ENCODE measurements at regions of chr10 and their contacts with region 1.

Region 1: GRCh38 chr10:91298224-91298871 is 77.9 kb downstream of the PCGF5 start:
- DNase-seq: peak; percentile 74
- H3K4me3 ChIP-seq: peak overlapping the region in 1 of 2 donors; percentile 24
- H3K27ac ChIP-seq: peak overlapping the region in 1 of 2 donors; percentile 20
- H3K4me1 ChIP-seq: no peaks in the 10 kb centered on the region
- H3K27me3 ChIP-seq: no peaks in the 10 kb centered on the region
- CTCF ChIP-seq: peak; percentile 88 to 95 (median 90)
- POLR2A ChIP-seq: no peak

Region 2: DNA sequence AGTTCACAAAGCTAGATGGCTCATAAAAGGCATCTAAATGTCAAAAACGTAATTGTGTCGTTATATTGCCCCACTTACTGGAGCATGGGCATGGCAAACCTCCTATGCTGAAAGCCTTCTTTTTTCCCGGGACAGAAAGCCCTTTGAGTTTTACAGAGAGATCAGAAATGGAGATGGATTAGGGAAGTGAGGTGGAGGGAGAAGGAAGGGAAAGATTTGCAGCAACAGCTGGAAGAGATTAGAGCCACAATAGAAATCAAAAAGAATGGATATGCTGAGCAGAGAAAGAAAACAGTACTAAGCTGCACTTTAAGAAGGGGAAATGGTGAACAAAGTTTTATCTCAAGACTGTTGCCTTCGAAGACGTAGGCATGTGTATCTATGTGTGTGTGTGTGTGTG is 175.1 kb before region 1 on chr10:
- intact Hi-C with region 1: no loop called
- DNase-seq: no peak
- H3K4me3 ChIP-seq: no peak overlapping the region
- H3K27ac ChIP-seq: no peak overlapping the region
- H3K4me1 ChIP-seq: no peaks in the 10 kb centered on the region
- H3K27me3 ChIP-seq: no peaks in the 10 kb centered on the region
- CTCF ChIP-seq: no peak
- POLR2A ChIP-seq: no peak

Region 3: GRCh38 chr10:91367127-91367531 is 68.8 kb after region 1 on chr10:
- intact Hi-C with region 1: loop called (anchors 5 kb)
- DNase-seq: no peak
- H3K4me3 ChIP-seq: no peak overlapping the region
- H3K27ac ChIP-seq: no peak overlapping the region
- H3K4me1 ChIP-seq: no peaks in the 10 kb centered on the region
- H3K27me3 ChIP-seq: no peaks in the 10 kb centered on the region
- CTCF ChIP-seq: no peak
- POLR2A ChIP-seq: no peak

Region 4: DNA sequence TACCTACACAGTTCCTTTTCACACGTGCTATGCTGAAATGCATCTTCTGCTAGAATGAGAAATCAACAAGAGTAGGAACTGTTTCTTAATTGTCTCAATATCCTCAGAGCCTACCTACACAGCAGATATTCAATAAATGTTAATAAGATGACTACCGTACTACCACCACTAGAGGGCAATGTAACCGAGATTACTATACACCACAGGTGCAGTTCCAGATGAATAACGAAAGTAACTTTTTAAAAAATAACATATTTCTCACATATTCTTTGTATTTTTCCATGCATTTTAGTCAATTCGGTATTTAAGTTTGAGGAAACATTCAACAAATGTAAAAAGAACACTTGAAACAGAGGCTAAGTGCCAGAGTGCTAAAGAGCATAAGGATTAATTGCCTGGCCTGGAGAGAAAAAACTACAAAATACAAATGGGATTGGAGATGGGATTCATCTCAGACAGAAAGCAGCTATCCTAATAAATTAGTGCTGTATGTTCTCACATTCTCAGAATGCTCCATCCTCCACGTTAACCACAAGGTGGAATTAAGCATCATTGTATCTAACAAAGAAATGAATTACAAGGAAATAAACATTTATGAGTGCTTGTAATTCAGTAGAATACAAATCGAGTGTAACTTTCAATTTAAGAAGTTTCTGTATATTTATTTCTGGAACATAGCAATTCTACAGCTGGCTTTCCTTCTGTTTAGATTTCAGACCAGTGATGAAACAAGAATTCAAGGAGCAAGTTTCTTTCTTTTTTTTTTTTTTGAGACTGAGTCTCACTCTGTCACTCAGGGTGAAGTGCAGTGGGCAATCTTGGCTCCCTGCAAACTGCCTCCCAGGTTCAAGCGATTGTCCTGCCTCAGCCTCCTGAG is 91.5 kb after region 1 on chr10:
- intact Hi-C with region 1: loop called (anchors 5 kb)
- DNase-seq: peak; percentile 36
- H3K4me3 ChIP-seq: no peak overlapping the region
- H3K27ac ChIP-seq: no peak overlapping the region
- H3K4me1 ChIP-seq: peaks cover 2% of the 10 kb centered on the region
- H3K27me3 ChIP-seq: no peaks in the 10 kb centered on the region
- CTCF ChIP-seq: peak; percentile 67 to 82 (median 74)
- POLR2A ChIP-seq: no peak

Region 5: DNA sequence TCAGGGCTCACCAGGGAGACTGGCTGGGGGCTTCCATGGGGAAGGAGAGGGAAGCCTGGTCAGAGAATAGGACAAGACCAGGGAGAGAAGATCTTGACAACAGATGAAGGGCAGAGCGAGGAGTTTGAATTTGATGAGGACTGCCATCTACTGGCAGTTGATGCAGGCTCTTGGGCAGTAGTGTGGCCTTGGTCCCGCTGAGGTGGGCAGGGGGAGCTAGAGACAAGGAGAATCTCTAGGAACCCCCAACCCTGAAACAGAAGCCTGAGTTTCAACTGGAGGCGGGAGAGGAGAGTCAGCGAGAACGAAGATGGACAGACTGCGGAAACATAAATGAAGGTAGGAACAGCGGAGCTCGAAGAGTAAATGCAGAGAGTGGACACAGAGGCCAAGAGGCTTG is 253.5 kb after region 1 on chr10:
- intact Hi-C with region 1: loop called (anchors 5 kb)
- DNase-seq: no peak
- H3K4me3 ChIP-seq: no peak overlapping the region
- H3K27ac ChIP-seq: no peak overlapping the region
- H3K4me1 ChIP-seq: peaks cover 7% of the 10 kb centered on the region
- H3K27me3 ChIP-seq: no peaks in the 10 kb centered on the region
- CTCF ChIP-seq: peak in 3 of 4 experiments; percentile 36 to 64 (median 53)
- POLR2A ChIP-seq: no peak

Region 6: DNA sequence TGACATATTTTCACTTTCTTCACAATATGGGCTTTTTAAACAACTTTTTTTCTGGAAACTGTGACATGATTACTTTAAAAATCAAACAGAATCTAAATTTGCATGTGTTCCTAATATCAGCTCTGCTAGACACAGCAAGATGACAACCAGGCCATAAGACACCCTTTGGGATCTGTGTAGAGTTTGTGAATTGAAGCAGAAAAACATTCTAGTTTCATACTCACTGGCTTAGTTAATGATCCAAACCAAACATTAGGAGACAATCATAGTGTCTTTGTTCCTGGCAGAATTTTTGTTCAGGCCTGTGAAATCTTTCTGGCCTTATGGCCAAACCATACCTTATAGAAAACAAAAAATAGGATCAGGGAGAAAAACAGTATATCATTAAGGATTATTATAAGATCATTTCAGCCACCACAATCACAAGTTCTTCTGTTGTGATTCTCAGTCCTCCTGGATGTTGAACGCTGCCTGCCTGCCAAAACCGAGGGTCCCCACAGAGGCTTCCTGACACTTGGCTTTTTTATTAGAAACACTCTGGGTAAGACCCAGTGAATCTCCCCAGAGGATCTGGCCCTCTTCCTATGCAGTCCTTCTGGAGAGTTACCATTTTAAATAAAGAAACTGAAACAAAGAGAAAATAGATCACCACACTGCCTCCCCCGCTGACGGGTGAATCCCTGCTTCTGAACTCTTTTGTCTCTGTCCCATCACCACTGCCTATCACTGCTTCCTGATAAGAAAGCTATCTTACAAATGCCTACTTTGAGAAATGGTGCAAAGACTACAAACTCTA is 413.7 kb after region 1 on chr10:
- intact Hi-C with region 1: no loop called
- DNase-seq: no peak
- H3K4me3 ChIP-seq: no peak overlapping the region
- H3K27ac ChIP-seq: peak overlapping the region in 1 of 2 donors; percentile 49
- H3K4me1 ChIP-seq: no peaks in the 10 kb centered on the region
- H3K27me3 ChIP-seq: no peaks in the 10 kb centered on the region
- CTCF ChIP-seq: no peak
- POLR2A ChIP-seq: no peak

Measured in prostate gland (tissue), 2 donors.